ENCODE measurements at regions of chrX and their contacts with region 1.

Region 1: GRCh38 chrX:46898207-46898606 is 14.0 kb upstream of the JADE3 start:
- DNase-seq: no peak
- ATAC-seq: no peak
- H3K4me3 ChIP-seq: no peak overlapping the region
- H3K27ac ChIP-seq: no peak overlapping the region
- H3K4me1 ChIP-seq: no peaks in the 10 kb centered on the region
- H3K27me3 ChIP-seq: no peaks in the 10 kb centered on the region
- CTCF ChIP-seq: no peak
- EP300 ChIP-seq: no peak
- POLR2A ChIP-seq: no peak
- RAD21 ChIP-seq: no peak

Region 2: DNA sequence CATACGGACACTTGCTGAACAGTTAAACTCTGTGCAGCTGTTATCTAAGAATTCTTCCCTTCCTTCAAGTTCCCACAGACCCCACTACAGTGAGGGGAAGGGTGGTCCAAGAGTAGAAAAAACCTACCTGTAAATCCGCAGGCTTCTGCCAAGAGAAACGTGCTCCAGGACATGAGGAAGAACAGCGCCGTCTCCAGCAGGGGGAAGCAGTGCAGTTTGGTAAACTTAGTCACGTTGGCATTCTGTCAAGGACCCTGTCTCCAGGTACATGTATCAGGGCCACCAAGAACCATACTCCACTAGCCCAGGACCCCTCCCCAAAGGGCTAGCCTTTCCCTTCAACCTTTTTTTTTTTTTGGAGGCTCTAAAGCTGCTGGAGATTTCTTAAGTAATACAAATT is 244.7 kb before region 1 on chrX:
- CTCF ChIA-PET with region 1: no interaction called
- POLR2A ChIA-PET with region 1: no interaction called
- in situ Hi-C with region 1: no loop called
- intact Hi-C with region 1: loop called (anchors 5 kb)
- DNase-seq: peak; percentile 3
- ATAC-seq: no peak
- H3K4me3 ChIP-seq: no peak overlapping the region
- H3K27ac ChIP-seq: no peak overlapping the region
- H3K4me1 ChIP-seq: no peaks in the 10 kb centered on the region
- H3K27me3 ChIP-seq: no peaks in the 10 kb centered on the region
- CTCF ChIP-seq: peak; percentile 36
- EP300 ChIP-seq: no peak
- POLR2A ChIP-seq: no peak
- RAD21 ChIP-seq: no peak

Region 3: GRCh38 chrX:46865281-46865680 is 32.9 kb before region 1 on chrX:
- CTCF ChIA-PET with region 1: no interaction called
- POLR2A ChIA-PET with region 1: no interaction called
- in situ Hi-C with region 1: no loop called
- intact Hi-C with region 1: no loop called
- DNase-seq: peak; percentile 0
- ATAC-seq: no peak
- H3K4me3 ChIP-seq: no peak overlapping the region
- H3K27ac ChIP-seq: no peak overlapping the region
- H3K4me1 ChIP-seq: 0 out of 2 replicates have a peak, but pooled peaks cover 7% of the 10 kb centered on the region
- H3K27me3 ChIP-seq: no peaks in the 10 kb centered on the region
- CTCF ChIP-seq: no peak
- EP300 ChIP-seq: no peak
- POLR2A ChIP-seq: no peak
- RAD21 ChIP-seq: no peak

Region 4: DNA sequence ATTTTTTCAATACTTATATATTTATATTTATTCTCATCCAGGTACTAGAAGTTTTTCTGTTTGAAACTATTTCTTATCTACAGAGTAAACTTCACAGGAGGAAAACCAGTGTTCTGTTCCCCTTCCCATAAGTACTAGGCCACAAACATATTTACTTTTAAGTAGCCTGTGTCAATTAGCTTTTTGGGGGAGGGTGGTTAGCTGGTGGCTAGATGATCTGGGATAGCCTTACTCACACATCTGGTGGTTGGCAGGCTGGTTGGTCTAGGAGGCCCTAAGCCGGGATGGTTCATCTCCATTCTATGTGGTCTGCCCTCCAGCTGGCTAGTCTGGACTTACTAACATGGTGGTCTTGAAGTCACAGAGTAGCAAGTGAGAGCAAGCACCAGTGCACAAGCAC is 20.2 kb after region 1 on chrX:
- CTCF ChIA-PET with region 1: no interaction called
- POLR2A ChIA-PET with region 1: no interaction called
- in situ Hi-C with region 1: no loop called
- intact Hi-C with region 1: no loop called
- DNase-seq: peak; percentile 67
- ATAC-seq: peak; percentile 79
- H3K4me3 ChIP-seq: no peak overlapping the region
- H3K27ac ChIP-seq: no peak overlapping the region
- H3K4me1 ChIP-seq: peaks cover 57% of the 10 kb centered on the region
- H3K27me3 ChIP-seq: no peaks in the 10 kb centered on the region
- CTCF ChIP-seq: no peak
- EP300 ChIP-seq: peak in 1 of 2 experiments; percentile 59; a peak in 1 of 4 replicates
- POLR2A ChIP-seq: no peak
- RAD21 ChIP-seq: no peak

Measured in HepG2 (cell line).